Thyroid gland (tissue), 4 donors: ENCODE measurements at regions of chr12 and their contacts with region 1.

Region 1: DNA sequence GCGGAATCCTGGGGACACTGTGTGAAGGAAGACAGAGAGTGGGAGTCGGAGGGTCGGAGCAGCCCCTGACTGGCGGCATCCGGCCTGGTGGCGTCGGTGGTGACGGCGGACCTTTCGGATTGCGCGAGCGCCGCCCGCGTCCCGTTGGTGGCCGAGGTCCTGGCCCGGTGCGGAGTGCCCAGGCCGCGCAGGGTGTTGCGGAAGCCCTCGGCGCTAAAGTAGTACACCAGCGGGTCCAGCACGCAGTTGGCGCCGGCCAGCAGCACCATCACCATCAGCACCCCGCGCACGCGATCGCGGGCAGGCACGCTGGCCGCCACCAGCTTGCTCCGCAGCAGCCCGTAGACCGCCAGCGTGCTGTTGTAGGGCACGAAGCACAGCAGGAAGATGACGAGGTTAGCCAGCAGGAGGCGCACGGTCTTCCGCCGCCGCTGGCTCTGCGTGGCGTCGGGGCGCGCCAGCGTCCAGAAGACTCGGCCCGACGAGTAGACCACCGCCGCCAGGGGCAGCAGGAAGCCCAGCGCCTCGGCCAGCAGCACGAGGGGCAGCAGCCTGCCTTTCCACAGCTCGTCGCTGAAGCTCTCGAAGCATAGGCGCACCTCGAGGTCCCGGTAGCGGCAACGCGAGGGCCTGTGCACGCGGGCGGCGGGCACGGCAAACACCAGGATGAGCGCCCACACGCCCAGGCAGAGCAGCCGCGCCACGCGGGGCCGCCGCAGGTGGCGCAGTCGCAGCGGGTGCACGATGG is 13.1 kb upstream of the CHD4 start:
- DNase-seq: peak; percentile 46 to 55
- H3K4me3 ChIP-seq: no peak overlapping the region
- H3K27ac ChIP-seq: no peak overlapping the region
- H3K4me1 ChIP-seq: peaks cover 0 to 5% of the 10 kb centered on the region in 2 donors
- H3K27me3 ChIP-seq: peaks cover 6% of the 10 kb centered on the region
- CTCF ChIP-seq: peak in 5 of 6 experiments; percentile 23 to 65 (median 43)
- POLR2A ChIP-seq: no peak

Region 2: DNA sequence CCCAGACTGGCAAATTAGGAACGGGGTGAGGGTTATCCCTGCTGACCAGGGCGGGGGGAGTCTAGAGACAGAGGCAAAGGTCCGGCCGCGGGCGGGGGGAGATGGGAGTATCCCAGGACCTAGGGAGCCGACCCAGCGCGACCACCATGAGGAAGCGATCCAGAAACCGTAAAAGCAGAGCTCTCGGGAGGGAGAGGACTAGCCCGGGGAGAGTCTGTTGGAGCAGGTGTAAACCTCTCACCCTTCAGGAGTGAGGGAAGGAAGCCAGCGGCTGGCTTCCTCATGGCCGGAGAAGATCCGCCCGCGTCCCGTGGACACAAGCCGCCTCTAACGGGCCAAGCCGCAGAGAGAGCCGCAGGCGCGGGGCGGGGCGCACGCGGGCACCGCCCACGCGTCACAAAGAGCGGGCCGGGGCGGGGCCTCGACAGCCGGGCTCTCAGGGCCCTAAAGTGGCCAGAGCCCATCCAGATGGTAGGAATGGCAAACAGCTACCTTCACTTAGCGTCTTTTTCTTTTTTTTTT is 26.8 kb after region 1 on chr12 and contains the start of gene ACRBP:
- intact Hi-C with region 1: loop called (anchors 2 kb)
- DNase-seq: peak; percentile 86 to 88
- H3K4me3 ChIP-seq: peak within 1 kb of the TSS in 2 of 3 donors; percentile 19 to 29
- H3K27ac ChIP-seq: peak within 1 kb of the TSS in 1 of 3 donors; percentile 4
- H3K4me1 ChIP-seq: no peaks in the 10 kb centered on the region
- H3K27me3 ChIP-seq: no peaks in the 10 kb centered on the region
- CTCF ChIP-seq: no peak
- POLR2A ChIP-seq: peak in 1 of 2 donors; percentile 62
- total RNA-seq, gene ACRBP: 8.9 to 11.4 (median 10.4) TPM

Region 3: DNA sequence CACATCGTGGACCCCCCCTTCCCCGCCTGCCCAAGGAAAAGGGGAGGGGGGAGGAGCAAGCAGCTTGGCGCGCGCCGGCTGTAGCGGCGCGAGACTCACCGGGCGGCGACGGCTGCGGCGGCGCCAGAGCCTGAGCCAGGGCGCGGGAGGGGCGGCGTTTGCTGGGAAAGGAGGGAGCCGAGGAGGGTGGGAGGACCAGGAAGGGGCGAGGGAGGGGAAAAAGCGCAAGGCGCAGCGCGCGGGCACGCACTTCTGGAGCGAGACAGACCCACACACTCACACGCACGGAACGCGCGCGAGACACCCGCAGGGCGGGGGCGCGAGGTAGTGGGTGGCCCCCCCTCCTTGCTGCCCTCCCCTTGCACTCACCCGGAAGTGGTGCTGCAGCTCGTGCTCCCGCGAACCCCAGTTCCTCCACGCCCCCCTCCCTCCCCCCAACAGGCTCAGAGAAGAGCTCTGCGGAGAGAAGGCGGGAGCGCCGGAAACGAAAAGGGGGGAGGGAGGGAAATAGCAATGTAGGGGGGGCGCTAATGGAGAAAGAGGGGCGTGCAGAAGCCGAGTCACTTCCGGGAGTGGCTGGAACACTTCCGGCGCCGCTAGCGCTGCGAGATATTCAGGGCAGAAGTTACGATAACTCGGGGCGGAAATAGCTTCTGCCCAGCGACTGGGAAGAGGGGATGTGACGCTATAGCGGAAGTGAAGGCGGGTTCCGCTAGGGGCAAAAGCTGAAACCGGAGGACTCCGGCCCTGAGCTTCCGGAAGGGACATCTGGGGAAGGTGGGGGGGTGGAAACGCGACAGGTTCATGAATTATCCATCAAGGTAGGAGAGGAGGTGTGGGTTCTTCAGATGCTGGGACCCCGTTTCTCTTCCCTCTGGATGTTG is 68.9 kb after region 1 on chr12 and contains the start of gene ZNF384:
- intact Hi-C with region 1: no loop called
- DNase-seq: peak; percentile 98 to 99
- H3K4me3 ChIP-seq: peak within 1 kb of the TSS; percentile 55 to 91 (median 80)
- H3K27ac ChIP-seq: peak within 1 kb of the TSS; percentile 85 to 99 (median 96)
- H3K4me1 ChIP-seq: peaks cover 21 to 31% of the 10 kb centered on the region in 2 donors
- H3K27me3 ChIP-seq: no peaks in the 10 kb centered on the region
- CTCF ChIP-seq: peak in 3 of 6 experiments; percentile 33 to 45 (median 36)
- POLR2A ChIP-seq: peak in 1 of 2 donors; percentile 48
- total RNA-seq, gene ZNF384: 41.9 to 72.8 (median 53.1) TPM

Region 4: GRCh38 chr12:6735448-6736191 is 115.3 kb after region 1 on chr12:
- intact Hi-C with region 1: no loop called
- DNase-seq: peak; percentile 74 to 78
- H3K4me3 ChIP-seq: no peak overlapping the region
- H3K27ac ChIP-seq: peak overlapping the region in 1 of 3 donors; percentile 8
- H3K4me1 ChIP-seq: no peaks in the 10 kb centered on the region
- H3K27me3 ChIP-seq: no peaks in the 10 kb centered on the region
- CTCF ChIP-seq: peak; percentile 50 to 83 (median 69)
- POLR2A ChIP-seq: no peak

Region 5: DNA sequence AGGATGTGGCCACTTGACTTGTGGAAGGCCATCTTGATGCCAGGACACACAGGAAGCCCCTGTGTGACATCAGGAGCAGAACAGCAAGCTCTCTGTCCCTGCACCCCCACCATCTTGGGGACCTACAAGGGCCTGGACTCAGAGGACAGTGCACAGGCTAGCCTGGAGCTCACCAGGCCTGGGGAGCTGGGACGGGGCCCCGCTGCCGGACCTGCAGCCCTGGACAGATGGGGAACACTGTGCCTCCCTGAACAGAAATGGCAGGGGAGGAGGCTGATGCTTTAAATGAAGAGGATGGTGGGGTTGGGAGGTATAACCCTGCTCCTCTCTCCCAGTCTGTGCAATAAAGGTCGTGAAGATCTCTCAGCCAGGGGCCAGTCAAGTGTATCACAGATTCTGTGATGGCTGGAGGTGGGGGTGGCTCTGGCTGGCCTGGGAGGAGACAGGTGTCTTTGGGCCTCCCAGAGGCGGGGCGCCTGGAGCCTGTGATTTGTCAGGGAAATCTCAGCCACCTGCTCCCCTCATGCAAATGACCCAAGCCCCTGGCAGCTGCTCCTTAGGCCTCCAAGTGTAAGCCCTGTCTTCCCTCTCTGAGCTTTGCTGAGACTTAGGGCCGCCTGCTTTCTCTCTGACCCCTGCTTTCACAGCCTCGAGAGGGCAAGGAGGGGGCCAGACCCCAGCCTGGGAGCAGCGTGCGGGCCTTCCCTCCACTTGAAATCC is 219.3 kb after region 1 on chr12:
- intact Hi-C with region 1: loop called (anchors 10 kb)
- DNase-seq: no peak
- H3K4me3 ChIP-seq: no peak overlapping the region
- H3K27ac ChIP-seq: no peak overlapping the region
- H3K4me1 ChIP-seq: peaks cover 0 to 5% of the 10 kb centered on the region in 2 donors
- H3K27me3 ChIP-seq: no peaks in the 10 kb centered on the region
- CTCF ChIP-seq: no peak
- POLR2A ChIP-seq: no peak